Right ventricle myocardium inferior (tissue), 1 donor: ENCODE measurements at regions of chr21 and their contacts with region 1.

Region 1: DNA sequence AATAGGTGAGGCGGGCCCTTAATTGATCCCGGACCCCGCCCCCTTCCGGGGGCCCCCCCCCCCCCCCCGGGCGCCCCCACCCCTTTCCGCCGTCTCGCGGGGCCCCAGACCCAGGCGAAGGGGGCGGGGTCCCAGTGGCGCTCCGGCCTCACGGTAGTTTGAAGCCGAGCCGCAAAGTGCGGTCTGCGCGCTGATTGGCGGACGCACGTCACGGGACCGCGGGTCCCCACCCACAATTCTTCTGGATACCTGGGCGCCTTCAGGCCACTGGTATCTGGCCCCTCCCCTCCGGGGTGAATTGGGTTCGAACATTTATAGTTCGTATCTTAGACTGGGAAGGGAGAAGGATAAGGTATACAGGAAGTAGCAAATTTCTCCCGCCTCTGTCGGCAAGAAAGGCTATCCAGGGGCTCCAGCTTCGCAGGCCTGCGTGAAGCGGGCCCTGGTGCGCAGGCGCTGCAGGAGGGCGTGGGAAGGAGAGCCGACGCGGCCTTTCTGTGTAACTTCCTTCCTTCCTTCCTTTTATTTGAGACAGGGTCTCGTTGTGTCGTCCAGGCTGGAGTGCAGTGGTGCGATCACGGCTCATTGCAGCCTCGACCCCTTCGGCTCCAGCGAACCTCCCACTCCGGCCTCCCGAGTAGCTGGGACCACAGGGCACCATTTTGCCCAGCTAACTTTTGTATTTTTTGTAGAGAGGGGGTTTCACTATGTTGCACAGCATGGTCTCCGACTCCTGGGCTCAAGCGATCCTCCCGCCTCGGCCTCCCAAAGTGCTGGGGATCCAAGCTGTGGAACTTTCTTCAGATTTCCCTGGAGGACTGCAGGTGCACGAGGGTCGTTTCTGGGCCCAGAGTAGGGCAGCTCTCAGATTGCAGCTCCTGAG is 564 bp upstream of the HMGN1 start:
- DNase-seq: peak; percentile 98
- ATAC-seq: peak; percentile 96

Region 2: GRCh38 chr21:39379986-39380891 is 30.8 kb after region 1 on chr21:
- intact Hi-C with region 1: loop called (anchors 2 kb)
- DNase-seq: peak; percentile 99
- ATAC-seq: peak; percentile 99

Region 3: GRCh38 chr21:39430457-39430856 is 81.0 kb after region 1 on chr21:
- intact Hi-C with region 1: no loop called
- DNase-seq: no peak
- ATAC-seq: no peak